ENCODE measurements at regions of chr6 and their contacts with region 1.

Region 1: DNA sequence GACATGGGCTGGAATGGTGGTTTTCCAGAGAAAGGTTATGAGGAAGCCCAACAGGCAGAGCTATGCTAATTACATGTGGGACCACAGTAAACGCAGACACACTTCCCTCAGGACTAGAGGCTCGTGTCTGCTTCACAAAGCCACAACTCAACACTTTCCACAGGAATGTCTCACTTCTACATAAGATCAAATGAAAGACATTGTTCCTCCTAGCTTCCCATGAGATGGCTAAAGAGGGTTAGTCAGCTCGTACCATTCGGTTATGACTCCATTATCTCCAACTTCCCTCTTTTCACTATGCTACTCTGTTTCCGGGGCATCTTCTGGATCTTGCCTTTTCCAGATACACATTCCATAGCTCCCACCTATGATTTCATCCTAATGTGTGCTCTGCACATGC is 29.1 kb upstream of the ZC3H12D start:
- DNase-seq: no peak

Region 2: GRCh38 chr6:148440877-148441453 is 1073.0 kb before region 1 on chr6:
- intact Hi-C with region 1: no loop called
- DNase-seq: peak in 6 of 10 donors; percentile 27 to 90 (median 68)

Region 3: GRCh38 chr6:149028767-149029405 is 485.0 kb before region 1 on chr6:
- intact Hi-C with region 1: loop called (anchors 1 kb)
- DNase-seq: peak in 2 of 10 donors; percentile 54 to 58

Region 4: GRCh38 chr6:149082286-149082707 is 431.6 kb before region 1 on chr6:
- intact Hi-C with region 1: loop called (anchors 1 kb)
- DNase-seq: peak; percentile 58 to 95 (median 83)

Region 5: GRCh38 chr6:149324428-149324827 is 189.5 kb before region 1 on chr6:
- intact Hi-C with region 1: loop called (anchors 10 kb)
- DNase-seq: no peak

Region 6: GRCh38 chr6:149499066-149499465 is 14.8 kb before region 1 on chr6:
- intact Hi-C with region 1: no loop called
- DNase-seq: no peak